ENCODE measurements at regions of chr9 and their contacts with region 1.

Region 1: DNA sequence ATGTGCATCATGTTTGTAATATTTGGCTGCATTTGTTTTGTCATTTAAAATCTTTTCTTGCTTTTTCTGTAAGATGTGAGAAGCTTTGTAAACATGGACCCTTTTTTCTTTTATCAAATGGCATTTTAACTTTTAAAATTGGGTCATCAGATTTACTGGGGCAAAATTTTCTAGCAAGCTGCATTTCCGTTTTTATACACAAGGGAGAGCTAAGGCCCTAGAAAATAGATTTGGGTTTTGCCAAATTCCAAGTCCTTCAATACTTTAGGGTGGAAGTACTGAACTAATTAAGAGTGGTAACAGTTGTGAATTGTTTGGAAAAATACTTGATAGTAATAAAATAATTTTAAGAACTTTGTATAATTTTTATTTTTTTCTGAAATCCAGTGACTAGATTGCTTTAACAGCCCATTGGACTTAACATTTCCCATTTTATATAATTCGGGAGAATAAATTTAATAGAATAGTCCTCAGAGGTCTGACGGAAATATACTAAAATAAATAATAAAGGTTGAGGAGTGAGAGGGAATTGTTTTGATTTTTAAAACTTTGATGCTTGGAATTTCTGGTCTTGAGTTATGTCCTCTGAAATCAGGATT is 117.4 kb downstream of the SMARCA2 start:
- DNase-seq: no peak
- H3K4me3 ChIP-seq: no peak overlapping the region
- H3K4me3 Mint-ChIP-seq: no peak overlapping the region
- H3K27ac Mint-ChIP-seq: no peak overlapping the region
- H3K4me1 ChIP-seq: no peaks in the 10 kb centered on the region
- H3K4me1 Mint-ChIP-seq: no peaks in the 10 kb centered on the region
- H3K27me3 ChIP-seq: no peaks in the 10 kb centered on the region
- H3K27me3 Mint-ChIP-seq: peaks cover 4% of the 10 kb centered on the region
- CTCF ChIP-seq: peak; percentile 45 to 66

Region 2: GRCh38 chr9:1857808-1858207 is 274.8 kb before region 1 on chr9:
- CTCF ChIA-PET with region 1: no interaction called
- POLR2A ChIA-PET with region 1: no interaction called
- intact Hi-C with region 1: no loop called
- DNase-seq: no peak
- H3K4me3 ChIP-seq: no peak overlapping the region
- H3K4me3 Mint-ChIP-seq: no peak overlapping the region
- H3K27ac Mint-ChIP-seq: no peak overlapping the region
- H3K4me1 ChIP-seq: no peaks in the 10 kb centered on the region
- H3K4me1 Mint-ChIP-seq: no peaks in the 10 kb centered on the region
- H3K27me3 ChIP-seq: no peaks in the 10 kb centered on the region
- H3K27me3 Mint-ChIP-seq: peaks cover 14% of the 10 kb centered on the region
- CTCF ChIP-seq: no peak

Region 3: DNA sequence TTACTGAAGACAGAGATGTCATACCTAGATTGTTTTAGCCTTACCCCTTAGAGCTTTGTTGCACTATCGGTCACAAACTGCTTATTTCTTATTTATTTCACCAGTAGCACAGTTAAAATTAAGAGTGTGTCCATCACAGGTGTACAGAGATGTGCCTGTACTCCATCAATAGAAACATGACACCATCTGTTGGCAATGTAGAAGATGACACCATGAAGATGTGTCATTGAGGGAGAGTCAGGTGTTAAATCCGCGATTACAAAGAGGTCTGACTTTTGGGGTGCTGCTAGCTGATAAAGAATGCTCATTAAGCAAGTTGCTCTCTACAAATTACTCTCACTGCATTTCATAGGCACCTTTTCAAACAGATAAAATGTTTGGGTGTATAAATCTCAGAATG is 47.0 kb after region 1 on chr9:
- CTCF ChIA-PET with region 1: no interaction called
- POLR2A ChIA-PET with region 1: no interaction called
- intact Hi-C with region 1: loop called (anchors 1 kb)
- DNase-seq: no peak
- H3K4me3 ChIP-seq: no peak overlapping the region
- H3K4me3 Mint-ChIP-seq: no peak overlapping the region
- H3K27ac Mint-ChIP-seq: no peak overlapping the region
- H3K4me1 ChIP-seq: no peaks in the 10 kb centered on the region
- H3K4me1 Mint-ChIP-seq: no peaks in the 10 kb centered on the region
- H3K27me3 ChIP-seq: no peaks in the 10 kb centered on the region
- H3K27me3 Mint-ChIP-seq: no peaks in the 10 kb centered on the region
- CTCF ChIP-seq: no peak

Region 4: GRCh38 chr9:2367973-2368372 is 235.4 kb after region 1 on chr9:
- CTCF ChIA-PET with region 1: no interaction called
- POLR2A ChIA-PET with region 1: no interaction called
- intact Hi-C with region 1: no loop called
- DNase-seq: peak in 1 of 2 experiments; percentile 10
- H3K4me3 ChIP-seq: no peak overlapping the region
- H3K4me3 Mint-ChIP-seq: no peak overlapping the region
- H3K27ac Mint-ChIP-seq: no peak overlapping the region
- H3K4me1 ChIP-seq: no peaks in the 10 kb centered on the region
- H3K4me1 Mint-ChIP-seq: no peaks in the 10 kb centered on the region
- H3K27me3 ChIP-seq: no peaks in the 10 kb centered on the region
- H3K27me3 Mint-ChIP-seq: no peaks in the 10 kb centered on the region
- CTCF ChIP-seq: no peak

Region 5: GRCh38 chr9:2662496-2662895 is 529.9 kb after region 1 on chr9:
- CTCF ChIA-PET with region 1: no interaction called
- POLR2A ChIA-PET with region 1: no interaction called
- intact Hi-C with region 1: loop called (anchors 2 kb)
- DNase-seq: peak in 1 of 2 experiments; percentile 18
- H3K4me3 ChIP-seq: no peak overlapping the region
- H3K4me3 Mint-ChIP-seq: no peak overlapping the region
- H3K27ac Mint-ChIP-seq: no peak overlapping the region
- H3K4me1 ChIP-seq: no peaks in the 10 kb centered on the region
- H3K4me1 Mint-ChIP-seq: no peaks in the 10 kb centered on the region
- H3K27me3 ChIP-seq: no peaks in the 10 kb centered on the region
- H3K27me3 Mint-ChIP-seq: no peaks in the 10 kb centered on the region
- CTCF ChIP-seq: peak in 1 of 2 experiments; percentile 8

Region 6: DNA sequence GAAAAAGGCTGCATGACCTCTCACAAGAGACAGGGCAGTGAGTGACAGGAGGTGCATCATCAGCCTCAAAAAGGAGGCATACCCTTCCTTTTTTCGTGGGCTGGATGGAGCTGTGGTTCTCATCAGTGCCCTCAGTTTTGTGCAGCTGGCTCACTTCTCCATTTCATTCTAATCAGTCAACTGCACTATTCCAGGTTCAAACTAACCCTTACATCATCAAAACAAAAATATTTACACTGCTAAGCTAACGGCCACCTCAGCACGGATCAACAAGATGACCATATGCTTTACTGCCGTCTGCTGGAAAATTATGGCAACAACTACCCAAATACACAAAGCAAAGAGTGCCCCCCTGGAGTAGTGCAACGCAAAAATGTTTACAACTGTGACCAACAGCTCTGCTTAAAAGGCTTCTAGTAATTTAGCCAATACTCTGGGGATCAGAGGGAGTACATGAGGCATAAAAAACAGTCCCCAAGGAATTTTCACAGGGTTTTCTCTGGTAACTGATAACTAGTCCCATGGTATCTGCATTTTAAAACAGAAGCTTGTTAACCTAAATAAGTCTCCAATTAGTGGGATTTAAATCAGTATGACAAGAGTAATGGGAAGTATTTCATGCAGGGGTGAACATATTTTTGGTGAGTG is 595.5 kb after region 1 on chr9:
- CTCF ChIA-PET with region 1: no interaction called
- POLR2A ChIA-PET with region 1: no interaction called
- intact Hi-C with region 1: loop called (anchors 5 kb)
- DNase-seq: peak in 1 of 2 experiments; percentile 16
- H3K4me3 ChIP-seq: no peak overlapping the region
- H3K4me3 Mint-ChIP-seq: no peak overlapping the region
- H3K27ac Mint-ChIP-seq: no peak overlapping the region
- H3K4me1 ChIP-seq: peaks cover 15% of the 10 kb centered on the region
- H3K4me1 Mint-ChIP-seq: peaks cover 5% of the 10 kb centered on the region
- H3K27me3 ChIP-seq: no peaks in the 10 kb centered on the region
- H3K27me3 Mint-ChIP-seq: no peaks in the 10 kb centered on the region
- CTCF ChIP-seq: peak in 1 of 2 experiments; percentile 45

Region 7: DNA sequence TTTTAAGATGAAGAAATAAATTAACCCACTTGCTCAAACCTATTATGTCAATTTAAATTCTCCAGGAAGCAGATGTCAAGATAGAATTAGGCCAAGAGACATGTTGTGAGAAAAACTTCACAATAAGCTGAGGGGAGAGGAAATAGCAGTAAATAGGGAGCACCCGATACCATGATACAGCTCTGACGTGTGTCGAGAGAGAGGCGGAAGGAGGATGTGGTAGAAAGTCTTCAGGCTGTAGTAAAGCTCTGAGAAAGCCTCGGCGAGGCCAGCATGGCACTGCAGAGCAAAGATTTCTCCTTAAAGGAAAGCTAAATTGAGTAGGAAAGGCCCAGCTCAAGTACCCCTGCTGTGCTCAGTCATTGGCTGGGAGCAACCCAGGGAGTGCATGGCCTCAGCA is 717.4 kb after region 1 on chr9:
- CTCF ChIA-PET with region 1: no interaction called
- POLR2A ChIA-PET with region 1: no interaction called
- intact Hi-C with region 1: loop called (anchors 10 kb)
- DNase-seq: no peak
- H3K4me3 ChIP-seq: no peak overlapping the region
- H3K4me3 Mint-ChIP-seq: no peak overlapping the region
- H3K27ac Mint-ChIP-seq: no peak overlapping the region
- H3K4me1 ChIP-seq: no peaks in the 10 kb centered on the region
- H3K4me1 Mint-ChIP-seq: no peaks in the 10 kb centered on the region
- H3K27me3 ChIP-seq: no peaks in the 10 kb centered on the region
- H3K27me3 Mint-ChIP-seq: peaks cover 2% of the 10 kb centered on the region
- CTCF ChIP-seq: no peak

Measured in Caco-2 (cell line).